H1 (cell line): ENCODE measurements at regions of chr1 and their contacts with region 1.

Region 1: GRCh38 chr1:46983830-46984586 is 39.5 kb upstream of the CYP4X1 start:
- DNase-seq: no peak
- H3K4me3 ChIP-seq: peak overlapping the region in 1 of 4 experiments; percentile 2; a peak in 2 of 8 replicates
- H3K27ac ChIP-seq: no peak overlapping the region
- H3K4me1 ChIP-seq: peaks cover 0 to 20% (median 13%) of the 10 kb centered on the region in 4 experiments; a peak in 6 of 7 replicates
- H3K27me3 ChIP-seq: no peaks in the 10 kb centered on the region
- CTCF ChIP-seq: no peak
- EP300 ChIP-seq: no peak
- POLR2A ChIP-seq: no peak
- RAD21 ChIP-seq: no peak

Region 2: DNA sequence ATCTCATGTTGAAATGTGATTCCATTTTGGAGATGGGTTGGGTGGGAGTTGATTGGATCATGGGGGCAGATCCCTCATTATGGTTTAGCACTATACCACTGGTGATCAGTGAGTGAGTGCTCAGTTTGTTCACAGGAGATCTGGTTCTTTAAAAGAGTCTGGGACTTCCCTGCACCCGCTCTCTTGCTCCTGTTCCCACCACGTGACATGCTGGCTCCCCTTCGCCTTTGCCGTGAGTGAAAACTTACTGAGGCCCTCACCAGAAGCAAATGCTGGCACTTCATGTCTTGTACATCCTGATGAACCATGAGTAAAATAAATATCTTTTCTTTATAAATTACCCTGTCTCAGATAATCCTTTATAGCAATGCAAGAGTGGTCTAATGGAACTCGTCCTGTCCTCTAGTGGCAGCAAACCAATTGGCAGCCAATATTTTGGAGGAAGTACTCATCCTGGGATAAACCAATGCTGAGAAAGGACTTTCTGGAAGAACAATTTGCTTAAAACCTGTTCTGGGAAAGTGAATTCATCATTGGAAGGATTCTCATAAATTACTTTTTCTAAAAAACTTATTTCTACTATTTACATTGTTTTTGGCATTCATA is 14.9 kb before region 1 on chr1:
- CTCF ChIA-PET with region 1: interaction called, 13 read pairs
- POLR2A ChIA-PET with region 1: interaction called, 3 read pairs
- DNase-seq: no peak
- H3K4me3 ChIP-seq: no peak overlapping the region
- H3K27ac ChIP-seq: no peak overlapping the region
- H3K4me1 ChIP-seq: no peaks in the 10 kb centered on the region
- H3K27me3 ChIP-seq: no peaks in the 10 kb centered on the region
- CTCF ChIP-seq: peak in 2 of 3 experiments; percentile 49 to 54; a peak in 3 of 4 replicates
- EP300 ChIP-seq: no peak
- POLR2A ChIP-seq: no peak
- RAD21 ChIP-seq: peak; percentile 48 to 55